Heart left ventricle (tissue), 16 donors: ENCODE measurements at regions of chr1 and their contacts with region 1.

Region 1: DNA sequence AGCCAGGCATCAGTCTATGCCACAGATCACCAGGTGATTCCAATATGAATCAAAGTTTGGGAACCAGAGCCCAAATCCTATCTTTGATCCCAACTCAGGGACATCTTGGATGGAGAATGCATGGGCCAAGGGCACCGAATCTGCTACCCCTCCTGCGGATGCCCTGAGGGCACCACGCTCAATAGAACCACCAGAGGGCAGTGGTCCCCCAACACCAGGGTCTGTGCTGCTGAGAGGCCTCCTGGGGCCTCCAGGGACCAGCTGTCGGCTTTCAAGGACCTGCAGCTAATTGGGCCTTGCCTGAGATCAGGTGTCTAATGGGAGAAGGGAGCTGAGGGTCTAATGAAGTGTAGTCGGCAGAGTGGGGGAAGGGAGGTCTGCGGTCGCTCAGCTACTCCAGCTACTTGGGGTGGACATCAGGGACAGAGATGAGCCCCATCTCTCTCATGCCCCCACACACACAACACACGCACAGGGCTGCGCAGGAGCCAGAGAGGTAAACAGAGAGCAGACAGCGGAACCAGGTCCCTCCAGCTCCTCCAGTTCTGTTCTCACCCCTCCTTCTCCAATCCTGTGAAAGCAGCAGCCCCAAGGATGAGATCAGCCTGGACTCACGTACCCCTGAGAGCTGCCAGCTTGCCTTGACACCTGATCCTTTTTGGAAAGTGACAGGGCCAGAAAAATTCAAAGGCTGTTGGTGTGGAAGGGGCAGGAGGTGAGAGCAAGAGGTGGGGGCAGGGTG is 34.9 kb upstream of the PPP1R15B start:
- DNase-seq: peak; percentile 71 to 85 (median 83)
- ATAC-seq: peak; percentile 39 to 75 (median 72)
- H3K4me3 ChIP-seq: no peak overlapping the region
- H3K27ac ChIP-seq: peak overlapping the region in 9 of 12 donors; percentile 19 to 62 (median 54)
- H3K4me1 ChIP-seq: peaks cover 7 to 75% (median 52%) of the 10 kb centered on the region in 12 donors
- H3K27me3 ChIP-seq: no peaks in the 10 kb centered on the region
- CTCF ChIP-seq: peak; percentile 70 to 84 (median 79)
- POLR2A ChIP-seq: no peak

Region 2: DNA sequence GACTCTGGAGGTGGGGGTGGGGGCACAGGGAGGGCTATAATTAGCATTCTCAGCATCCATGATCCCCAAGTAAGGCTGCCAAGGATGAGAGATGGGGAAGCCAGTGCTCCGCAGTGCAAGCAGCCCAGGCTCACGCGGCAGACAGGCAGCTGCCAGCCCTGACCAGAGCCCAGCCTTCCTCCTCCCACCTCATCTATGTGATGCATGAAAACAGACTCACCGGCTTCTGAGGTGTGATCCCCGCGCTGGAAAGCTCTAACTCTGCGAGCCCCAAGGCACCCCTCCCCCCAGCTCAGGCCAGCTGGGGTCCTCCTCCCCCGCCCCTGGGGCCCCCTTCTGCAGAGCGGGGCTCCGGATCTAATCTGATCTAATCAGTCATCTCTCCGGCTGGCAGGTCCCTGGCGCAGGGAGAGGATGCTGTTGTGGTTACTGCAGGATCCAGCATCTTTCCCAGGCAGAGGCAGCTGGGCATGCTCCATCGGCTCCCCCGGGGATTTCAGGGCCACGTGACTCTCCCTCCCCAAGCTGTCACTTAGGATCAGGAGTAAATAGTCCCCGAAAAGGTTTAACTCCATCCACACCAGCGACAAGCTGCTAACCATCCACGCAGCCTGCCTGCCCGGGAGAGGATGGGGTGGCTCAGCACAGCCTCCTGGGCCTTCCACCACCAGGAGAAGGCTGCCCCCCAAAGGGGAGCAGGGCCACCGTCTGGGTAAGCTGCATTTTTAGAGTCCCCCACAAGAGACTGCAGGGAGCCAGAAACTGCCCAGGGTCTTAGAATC is 86.9 kb before region 1 on chr1 and contains the start of gene PLEKHA6:
- intact Hi-C with region 1: no loop called
- DNase-seq: peak in 4 of 5 donors; percentile 50 to 69 (median 56)
- ATAC-seq: peak in 2 of 4 donors; percentile 19 to 33
- H3K4me3 ChIP-seq: peak within 1 kb of the TSS in 6 of 12 donors; percentile 1 to 42 (median 31)
- H3K27ac ChIP-seq: peak within 1 kb of the TSS in 1 of 12 donors; percentile 2
- H3K4me1 ChIP-seq: peaks cover 5 to 52% (median 33%) of the 10 kb centered on the region in 12 donors
- H3K27me3 ChIP-seq: peaks cover 0 to 4% (median 0%) of the 10 kb centered on the region in 9 donors
- CTCF ChIP-seq: peak in 9 of 12 donors; percentile 12 to 46 (median 19)
- POLR2A ChIP-seq: no peak
- total RNA-seq, gene PLEKHA6: 9.1 to 33.2 (median 20.1) TPM

Region 3: GRCh38 chr1:204465546-204466415 is 19.2 kb after region 1 on chr1:
- intact Hi-C with region 1: loop called in 2 of 10 experiments (anchors 2 kb)
- DNase-seq: peak in 3 of 5 donors; percentile 53 to 67 (median 54)
- ATAC-seq: peak; percentile 3 to 27 (median 20)
- H3K4me3 ChIP-seq: peak overlapping the region in 9 of 12 donors; percentile 28 to 48 (median 36)
- H3K27ac ChIP-seq: peak overlapping the region; percentile 77 to 99 (median 90)
- H3K4me1 ChIP-seq: peaks cover 24 to 93% (median 79%) of the 10 kb centered on the region in 12 donors
- H3K27me3 ChIP-seq: no peaks in the 10 kb centered on the region
- CTCF ChIP-seq: no peak
- POLR2A ChIP-seq: no peak

Region 4: DNA sequence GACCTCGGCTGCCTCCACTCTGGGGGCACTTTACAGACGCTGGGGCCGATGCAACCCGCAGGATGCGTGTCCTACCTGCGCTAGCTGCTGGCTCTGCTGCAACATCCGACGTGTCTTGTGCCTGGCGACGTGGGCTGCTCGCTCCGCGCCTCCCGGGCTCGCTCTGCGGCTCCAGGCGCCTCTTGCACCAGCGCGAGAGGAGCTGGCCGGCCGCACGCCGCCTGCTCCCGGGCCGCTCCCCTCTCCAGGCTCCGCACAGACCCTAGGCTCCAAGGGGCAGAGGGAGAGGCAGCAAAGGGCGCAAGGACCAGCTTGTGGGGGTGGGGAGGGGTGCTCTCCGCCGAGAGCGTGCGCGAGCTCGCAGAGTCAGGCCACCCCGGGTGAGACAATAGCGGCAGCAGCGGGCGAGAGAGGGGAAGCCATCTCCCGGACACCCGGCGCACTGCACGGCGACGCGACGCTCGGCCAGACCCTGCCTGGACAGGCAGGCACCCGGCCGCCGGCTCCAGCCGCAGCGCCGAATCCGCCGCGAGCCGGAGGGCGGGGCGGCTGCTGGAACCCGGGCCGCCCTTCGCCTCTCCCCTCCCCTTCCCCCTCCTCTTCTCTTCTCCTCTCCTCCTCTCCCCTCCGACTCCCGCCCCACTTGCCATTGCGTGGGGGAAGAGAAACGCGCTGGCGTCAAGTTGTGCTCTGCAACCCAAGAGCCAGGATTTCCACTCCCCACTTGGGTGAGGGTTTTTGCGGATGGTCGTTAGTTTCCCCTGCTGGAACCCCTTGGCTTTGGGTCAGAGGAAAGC is 47.9 kb after region 1 on chr1 and contains the start of gene PIK3C2B:
- intact Hi-C with region 1: loop called in 7 of 10 experiments (anchors 1 to 2 kb)
- DNase-seq: peak; percentile 87 to 93 (median 89)
- ATAC-seq: peak; percentile 90 to 96 (median 94)
- H3K4me3 ChIP-seq: peak within 1 kb of the TSS; percentile 59 to 86 (median 75)
- H3K27ac ChIP-seq: peak within 1 kb of the TSS; percentile 67 to 98 (median 90)
- H3K4me1 ChIP-seq: peaks cover 3 to 46% (median 30%) of the 10 kb centered on the region in 12 donors
- H3K27me3 ChIP-seq: no peaks in the 10 kb centered on the region
- CTCF ChIP-seq: peak; percentile 36 to 78 (median 65)
- POLR2A ChIP-seq: peak in 1 of 2 donors; percentile 65
- total RNA-seq, gene PIK3C2B: 12.9 to 42.5 (median 19.8) TPM

Region 5: DNA sequence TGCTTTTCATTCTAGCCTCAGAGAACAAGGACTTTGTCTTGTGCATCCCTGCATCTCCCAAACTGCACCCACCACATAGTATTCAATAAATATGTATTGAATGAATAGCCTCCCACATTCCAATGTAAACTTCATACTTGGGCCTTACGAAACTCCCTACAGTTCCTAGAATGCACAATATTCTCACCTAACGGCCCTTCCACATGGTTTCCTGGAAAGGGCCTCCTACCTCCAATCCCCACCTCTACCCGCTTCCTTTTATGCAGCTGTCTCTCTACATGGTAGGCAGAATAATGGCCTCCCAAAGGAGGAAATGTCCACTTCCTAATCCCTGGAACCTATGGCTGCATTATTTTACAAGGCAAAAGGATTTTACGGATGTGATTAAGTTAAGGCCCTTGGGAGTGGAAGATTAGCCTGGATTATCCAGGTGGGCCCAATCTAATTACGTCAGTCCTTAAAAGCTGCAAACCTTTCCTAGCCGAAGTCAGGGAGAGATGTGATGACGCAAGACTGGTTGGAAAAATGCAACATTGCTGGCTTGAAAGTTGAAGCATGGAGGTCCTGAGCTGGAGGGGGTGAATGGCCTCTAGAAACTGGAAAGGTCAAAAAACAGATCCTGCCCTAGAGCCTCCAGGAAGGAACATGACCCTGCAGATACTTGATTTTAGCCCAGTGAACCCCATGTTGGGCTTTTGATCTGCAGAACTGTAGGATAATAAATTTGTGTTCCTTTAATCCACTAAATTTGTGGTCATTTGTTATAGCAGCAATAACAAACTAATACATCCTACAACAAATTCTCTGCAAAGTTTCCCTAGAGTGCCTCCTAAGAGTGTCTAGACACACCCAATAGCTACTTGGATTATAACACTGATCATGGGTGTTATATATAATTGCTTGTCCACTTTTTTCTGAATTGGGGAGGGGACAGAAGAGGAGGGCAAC is 53.3 kb after region 1 on chr1:
- intact Hi-C with region 1: loop called (anchors 1 to 2 kb)
- DNase-seq: no peak
- ATAC-seq: peak in 1 of 4 donors; percentile 8
- H3K4me3 ChIP-seq: no peak overlapping the region
- H3K27ac ChIP-seq: peak overlapping the region in 3 of 12 donors; percentile 14 to 39 (median 31)
- H3K4me1 ChIP-seq: peaks cover 0 to 23% (median 9%) of the 10 kb centered on the region in 12 donors
- H3K27me3 ChIP-seq: no peaks in the 10 kb centered on the region
- CTCF ChIP-seq: no peak
- POLR2A ChIP-seq: no peak

Region 6: DNA sequence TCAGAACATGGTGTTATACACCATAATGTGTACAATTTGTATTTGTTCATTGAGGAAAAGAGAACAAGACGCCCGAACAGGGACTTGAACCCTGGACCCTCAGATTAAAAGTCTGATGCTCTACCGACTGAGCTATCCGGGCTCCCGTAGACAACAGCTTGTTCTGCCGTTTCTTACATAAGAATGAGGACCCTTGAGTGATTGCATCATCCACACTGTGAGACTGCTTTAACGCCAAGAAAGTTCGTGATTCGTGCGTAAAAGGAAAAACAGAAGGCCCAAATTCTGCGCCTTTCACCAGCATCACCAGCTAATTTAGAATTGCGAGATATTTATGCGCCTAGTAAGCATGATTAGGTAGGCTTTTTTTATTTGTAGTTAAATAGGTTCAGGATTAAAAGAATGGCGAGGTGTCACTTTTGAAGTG is 60.4 kb after region 1 on chr1:
- intact Hi-C with region 1: loop called in 9 of 10 experiments (anchors 1 to 2 kb)
- DNase-seq: peak in 4 of 5 donors; percentile 72 to 83 (median 78)
- ATAC-seq: peak; percentile 77 to 89 (median 82)
- H3K4me3 ChIP-seq: peak overlapping the region; percentile 5 to 76 (median 60)
- H3K27ac ChIP-seq: peak overlapping the region; percentile 70 to 89 (median 84)
- H3K4me1 ChIP-seq: peaks cover 0 to 34% (median 7%) of the 10 kb centered on the region in 12 donors
- H3K27me3 ChIP-seq: no peaks in the 10 kb centered on the region
- CTCF ChIP-seq: no peak
- POLR2A ChIP-seq: peak in 1 of 2 donors; percentile 7

Region 7: DNA sequence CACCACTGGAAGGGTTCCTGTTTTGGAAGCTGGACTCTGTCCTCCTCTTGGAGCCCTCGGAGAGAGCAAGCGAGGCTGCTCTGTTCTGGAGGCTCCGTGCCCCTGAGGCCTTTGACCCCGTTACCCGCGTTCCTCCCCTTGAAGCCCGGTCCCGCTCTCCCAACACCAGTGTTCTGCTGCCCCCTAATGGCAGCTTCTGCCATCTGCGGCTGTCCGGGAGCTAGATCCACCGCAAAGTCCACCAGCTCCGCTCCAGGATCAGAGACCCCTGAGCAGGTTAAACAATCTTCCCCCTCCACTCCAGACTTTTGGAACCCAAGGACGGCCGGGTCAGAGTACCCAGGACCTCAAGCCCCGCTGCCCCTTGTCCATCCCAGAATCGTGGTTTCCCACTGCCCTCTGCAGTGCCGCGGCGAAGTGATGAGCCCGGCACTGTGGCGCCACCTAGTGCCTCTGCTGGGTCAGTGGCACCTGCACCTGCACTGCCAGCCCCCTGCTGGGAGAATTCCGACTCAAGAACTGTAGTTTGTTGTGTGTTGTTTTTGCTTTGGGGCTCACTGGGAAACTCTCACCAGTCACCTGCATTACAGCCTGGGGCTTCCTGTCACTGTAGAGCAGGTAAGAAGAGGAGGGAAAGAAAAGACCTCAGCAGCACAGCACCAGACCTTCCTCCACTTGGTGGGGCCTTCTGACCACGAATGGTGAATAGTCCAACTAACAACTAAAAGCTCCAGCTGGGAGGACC is 360.6 kb after region 1 on chr1:
- intact Hi-C with region 1: loop called in 1 of 10 experiments (anchors 10 kb)
- DNase-seq: peak; percentile 80 to 86 (median 82)
- ATAC-seq: peak; percentile 85 to 96 (median 94)
- H3K4me3 ChIP-seq: peak overlapping the region in 11 of 12 donors; percentile 37 to 63 (median 51)
- H3K27ac ChIP-seq: no peak overlapping the region
- H3K4me1 ChIP-seq: peaks cover 0 to 11% (median 0%) of the 10 kb centered on the region in 12 donors
- H3K27me3 ChIP-seq: no peaks in the 10 kb centered on the region
- CTCF ChIP-seq: peak; percentile 92 to 98 (median 96)
- POLR2A ChIP-seq: no peak